ENCODE measurements at regions of chr10 and their contacts with region 1.

Region 1: GRCh38 chr10:68023292-68023691 is 51.8 kb downstream of the HERC4 start:
- DNase-seq: no peak
- ATAC-seq: no peak
- H3K4me3 ChIP-seq: no peak overlapping the region
- H3K27ac ChIP-seq: no peak overlapping the region
- H3K4me1 ChIP-seq: no peaks in the 10 kb centered on the region
- H3K27me3 ChIP-seq: no peaks in the 10 kb centered on the region
- CTCF ChIP-seq: no peak
- EP300 ChIP-seq: no peak
- POLR2A ChIP-seq: no peak
- RAD21 ChIP-seq: no peak

Region 2: GRCh38 chr10:68010426-68010940 is 12.8 kb before region 1 on chr10:
- CTCF ChIA-PET with region 1: no interaction called
- POLR2A ChIA-PET with region 1: no interaction called
- in situ Hi-C with region 1: no loop called
- intact Hi-C with region 1: no loop called
- DNase-seq: no peak
- ATAC-seq: no peak
- H3K4me3 ChIP-seq: no peak overlapping the region
- H3K27ac ChIP-seq: no peak overlapping the region
- H3K4me1 ChIP-seq: no peaks in the 10 kb centered on the region
- H3K27me3 ChIP-seq: no peaks in the 10 kb centered on the region
- CTCF ChIP-seq: no peak
- EP300 ChIP-seq: no peak
- POLR2A ChIP-seq: no peak
- RAD21 ChIP-seq: no peak

Region 3: DNA sequence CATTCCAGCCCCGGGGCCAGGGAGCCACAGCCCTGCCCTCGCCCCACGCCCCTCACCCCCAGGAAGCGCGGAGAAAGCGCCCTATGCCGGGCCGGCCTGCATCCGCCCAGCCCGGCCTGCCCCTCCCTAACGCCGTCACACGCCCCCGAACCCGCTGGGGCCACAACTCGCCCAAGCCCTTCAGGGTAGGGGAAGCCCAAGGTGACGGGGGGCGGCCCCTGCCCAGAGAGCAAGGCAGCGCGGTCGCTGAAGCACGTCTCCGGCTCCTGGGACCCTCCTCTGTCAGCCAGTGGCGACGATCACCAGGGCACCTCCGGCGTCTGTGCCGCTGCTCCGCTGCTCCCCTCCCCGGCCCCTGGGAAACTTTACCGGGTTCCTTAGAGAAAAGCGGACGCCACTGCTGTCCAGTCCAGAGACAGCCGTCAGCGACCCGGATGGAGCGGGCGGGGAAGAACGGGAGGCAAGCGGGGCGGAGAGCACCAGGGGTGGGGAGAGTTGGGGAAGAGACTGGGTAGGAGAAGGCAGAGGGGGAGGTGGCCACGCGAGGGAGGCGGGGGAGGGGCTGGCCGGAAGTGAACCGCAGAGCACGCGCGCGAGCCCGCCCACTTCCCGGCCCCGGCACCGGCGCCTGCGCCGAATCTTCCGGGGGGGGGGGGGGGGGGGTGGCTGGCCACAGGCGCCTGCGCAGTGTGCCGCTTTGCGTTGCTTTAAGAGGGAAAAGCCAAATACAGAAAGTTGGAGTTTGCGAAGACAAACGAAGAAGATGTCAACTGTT is 51.7 kb after region 1 on chr10 and contains the start of gene HERC4:
- CTCF ChIA-PET with region 1: no interaction called
- POLR2A ChIA-PET with region 1: no interaction called
- in situ Hi-C with region 1: no loop called
- intact Hi-C with region 1: loop called (anchors 10 kb)
- DNase-seq: peak; percentile 83
- ATAC-seq: peak; percentile 98
- H3K4me3 ChIP-seq: peak within 1 kb of the TSS; percentile 91 to 99 (median 94)
- H3K27ac ChIP-seq: peak within 1 kb of the TSS; percentile 96
- H3K4me1 ChIP-seq: peaks cover 37% of the 10 kb centered on the region
- H3K27me3 ChIP-seq: no peaks in the 10 kb centered on the region
- CTCF ChIP-seq: 0 out of 2 replicates have a peak, but pooled peaks have one; percentile 13
- EP300 ChIP-seq: peak in 1 of 2 experiments; percentile 32; a peak in 1 of 4 replicates
- POLR2A ChIP-seq: peak; percentile 56 to 67; a peak in 3 of 4 replicates
- RAD21 ChIP-seq: no peak; the same call in 1 of the 2 replicates
- total RNA-seq, gene HERC4: 20.0 and 20.2 TPM in 2 replicates

Region 4: GRCh38 chr10:68560186-68560942 is 537.1 kb after region 1 on chr10 and contains the start of gene TET1:
- CTCF ChIA-PET with region 1: no interaction called
- POLR2A ChIA-PET with region 1: no interaction called
- in situ Hi-C with region 1: no loop called
- intact Hi-C with region 1: no loop called
- DNase-seq: peak; percentile 64
- ATAC-seq: peak; percentile 88
- H3K4me3 ChIP-seq: peak within 1 kb of the TSS; percentile 91 to 99 (median 95)
- H3K27ac ChIP-seq: peak within 1 kb of the TSS; percentile 78
- H3K4me1 ChIP-seq: peaks cover 60% of the 10 kb centered on the region
- H3K27me3 ChIP-seq: no peaks in the 10 kb centered on the region
- CTCF ChIP-seq: peak; percentile 14; the same call in 1 of the 2 replicates
- EP300 ChIP-seq: no peak
- POLR2A ChIP-seq: peak; percentile 90 to 98
- RAD21 ChIP-seq: peak; percentile 42; the same call in 1 of the 2 replicates
- total RNA-seq, gene TET1: 7.3 and 10.6 TPM in 2 replicates

Measured in HepG2 (cell line).